SK-N-SH (cell line): ENCODE measurements at regions of chr20 and their contacts with region 1.

Region 1: DNA sequence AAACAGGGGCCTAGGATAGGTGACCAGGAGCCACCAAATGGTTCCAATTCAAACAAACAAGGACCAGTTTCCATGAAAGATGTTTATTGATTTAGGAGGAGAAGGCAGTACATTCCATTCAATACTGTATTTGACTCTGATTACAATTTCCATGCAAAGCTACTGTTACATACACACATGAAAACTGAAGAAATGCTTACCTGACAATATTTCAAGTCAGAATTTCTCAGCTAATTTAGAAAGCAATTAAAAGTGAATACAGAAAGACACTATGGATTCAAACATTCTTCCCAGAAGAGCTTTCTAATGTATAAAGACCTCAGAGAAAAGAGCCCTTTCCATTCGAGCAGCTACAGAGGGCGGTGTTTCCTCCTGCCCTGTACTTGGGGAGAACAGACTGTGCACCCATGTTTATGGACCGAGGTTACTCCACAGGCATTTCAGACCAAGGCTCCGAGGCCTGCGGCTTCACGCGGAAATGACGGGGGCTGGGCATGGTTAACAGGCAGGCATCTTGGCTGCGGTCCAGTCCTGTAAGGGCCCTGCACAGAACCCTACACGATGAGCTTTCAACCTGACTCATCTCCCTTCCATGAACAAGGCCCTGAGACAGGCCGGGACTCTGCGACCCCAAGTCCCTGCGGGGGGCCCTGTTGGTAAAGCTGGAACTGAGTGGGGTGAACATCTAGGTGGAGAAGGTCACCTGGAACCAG is 25.7 kb upstream of the TCFL5 start:
- DNase-seq: peak; percentile 80
- H3K4me3 ChIP-seq: no peak overlapping the region
- H3K27ac ChIP-seq: peak overlapping the region; percentile 65 to 79
- H3K4me1 ChIP-seq: peaks cover 17 to 19% of the 10 kb centered on the region in 2 experiments
- H3K27me3 ChIP-seq: no peaks in the 10 kb centered on the region
- CTCF ChIP-seq: no peak
- EP300 ChIP-seq: no peak
- RAD21 ChIP-seq: no peak

Region 2: DNA sequence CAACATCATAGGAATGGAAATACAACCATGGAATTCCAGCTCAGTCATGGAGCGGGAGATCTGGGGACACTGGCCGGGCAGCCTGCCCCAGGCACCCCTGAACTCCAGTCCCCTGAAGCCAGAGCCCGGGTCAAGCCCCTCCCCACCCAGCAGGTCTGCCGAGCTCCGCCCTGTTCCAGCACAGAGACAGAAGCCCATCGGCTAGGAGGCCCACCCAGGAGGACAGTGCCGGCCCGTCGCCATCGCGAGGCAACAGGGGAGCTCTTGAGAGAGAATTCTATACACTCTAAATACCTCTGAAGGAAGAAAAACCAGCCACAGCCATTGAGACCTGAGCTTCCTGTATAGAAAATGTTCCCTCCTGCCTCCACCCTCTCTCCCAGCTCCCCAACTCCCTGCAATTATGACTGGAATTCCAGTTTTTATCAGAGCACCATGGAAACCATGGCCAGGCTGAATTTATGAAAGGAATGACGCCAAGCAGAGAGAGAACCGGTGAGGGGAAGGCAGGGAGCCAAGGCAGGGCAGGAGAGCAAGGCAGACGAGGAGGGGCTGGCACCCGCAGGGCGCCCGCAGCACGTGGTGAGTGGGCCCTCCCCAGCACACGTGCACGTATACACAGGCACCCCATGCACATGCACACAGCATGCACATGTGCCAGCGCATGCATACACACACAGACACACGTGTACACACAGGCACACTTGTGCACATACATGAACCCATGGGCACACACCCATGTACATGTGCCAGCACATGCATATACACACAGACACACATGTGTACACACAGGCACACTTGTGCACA is 118.6 kb before region 1 on chr20:
- CTCF ChIA-PET with region 1: no interaction called
- POLR2A ChIA-PET with region 1: no interaction called
- DNase-seq: no peak
- H3K4me3 ChIP-seq: no peak overlapping the region
- H3K27ac ChIP-seq: peak overlapping the region in 1 of 2 experiments; percentile 31; a peak in 1 of 4 replicates
- H3K4me1 ChIP-seq: peaks cover 0 to 21% of the 10 kb centered on the region in 2 experiments; a peak in 2 of 4 replicates
- H3K27me3 ChIP-seq: no peaks in the 10 kb centered on the region
- CTCF ChIP-seq: no peak
- EP300 ChIP-seq: no peak
- RAD21 ChIP-seq: no peak

Region 3: DNA sequence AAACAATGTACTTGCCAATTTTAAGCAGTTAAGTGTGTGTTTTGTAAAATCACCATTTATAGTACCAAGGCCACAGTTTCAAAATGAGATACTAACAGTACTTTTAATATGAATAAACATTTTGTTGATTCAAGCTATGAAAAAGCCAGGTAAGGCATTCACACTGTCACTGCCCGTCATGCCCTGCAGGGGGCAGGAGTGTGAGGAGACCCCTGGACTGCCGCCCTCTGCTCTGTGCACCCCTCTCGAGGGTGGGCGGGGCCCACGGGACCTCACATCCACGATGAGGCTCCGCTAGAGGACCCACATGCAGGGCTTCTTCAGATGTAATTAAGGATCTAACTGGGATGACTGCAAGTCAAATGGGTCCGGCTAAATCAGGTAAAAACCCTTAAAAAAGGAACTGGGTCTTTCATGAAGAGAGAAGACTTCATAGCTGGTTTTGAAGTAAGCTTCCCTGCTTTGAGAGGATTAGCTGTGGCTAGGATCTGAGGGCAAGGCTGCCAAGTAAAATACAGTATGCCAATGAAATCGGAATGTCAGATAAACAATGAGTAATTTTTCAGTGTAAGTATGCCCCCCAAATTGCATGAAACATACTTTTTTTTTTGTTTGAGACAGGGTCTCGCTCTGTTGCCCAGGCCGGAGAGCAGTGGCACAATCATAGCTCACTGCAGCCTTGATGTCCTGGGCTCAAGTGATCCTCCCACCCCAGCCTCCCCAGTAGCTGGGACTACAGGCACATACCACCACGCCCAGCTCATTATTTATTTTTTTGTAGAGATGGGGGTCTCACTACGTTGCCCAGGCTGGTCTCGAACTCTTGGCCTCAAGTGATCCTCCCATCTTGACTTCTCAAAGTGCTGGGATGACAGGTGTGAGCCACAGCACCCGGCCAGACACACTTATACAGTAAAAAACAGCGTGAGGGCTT is 20.3 kb after region 1 on chr20:
- CTCF ChIA-PET with region 1: interaction called, 77 read pairs
- POLR2A ChIA-PET with region 1: interaction called, 4 read pairs
- DNase-seq: peak; percentile 83
- H3K4me3 ChIP-seq: peak overlapping the region in 1 of 2 experiments; percentile 25; a peak in 1 of 4 replicates
- H3K27ac ChIP-seq: peak overlapping the region in 1 of 2 experiments; percentile 20; a peak in 1 of 4 replicates
- H3K4me1 ChIP-seq: 0 out of 4 replicates have a peak, but pooled peaks cover 0 to 5% of the 10 kb centered on the region in 2 experiments
- H3K27me3 ChIP-seq: no peaks in the 10 kb centered on the region
- CTCF ChIP-seq: peak; percentile 59
- EP300 ChIP-seq: no peak
- RAD21 ChIP-seq: peak; percentile 20